ENCODE measurements at regions of chr17 and their contacts with region 1.

Region 1: GRCh38 chr17:8222630-8223356 is 12.4 kb upstream of the AURKB start:
- DNase-seq: peak; percentile 98
- H3K4me3 ChIP-seq: peak overlapping the region; percentile 45 to 71 (median 66)
- H3K27ac ChIP-seq: peak overlapping the region; percentile 95 to 98 (median 96)
- H3K4me1 ChIP-seq: peaks cover 0 to 42% (median 23%) of the 10 kb centered on the region in 4 donors
- H3K27me3 ChIP-seq: no peaks in the 10 kb centered on the region
- CTCF ChIP-seq: no peak
- EP300 ChIP-seq: peak in 1 of 4 donors; percentile 45
- POLR2A ChIP-seq: peak; percentile 57 to 80

Region 2: GRCh38 chr17:8128125-8128784 is 94.5 kb before region 1 on chr17:
- intact Hi-C with region 1: no loop called
- DNase-seq: no peak
- H3K4me3 ChIP-seq: no peak overlapping the region
- H3K27ac ChIP-seq: no peak overlapping the region
- H3K4me1 ChIP-seq: peaks cover 0 to 42% (median 38%) of the 10 kb centered on the region in 4 donors
- H3K27me3 ChIP-seq: peaks cover 4 to 33% (median 22%) of the 10 kb centered on the region in 3 donors
- CTCF ChIP-seq: no peak
- EP300 ChIP-seq: no peak
- POLR2A ChIP-seq: no peak

Region 3: DNA sequence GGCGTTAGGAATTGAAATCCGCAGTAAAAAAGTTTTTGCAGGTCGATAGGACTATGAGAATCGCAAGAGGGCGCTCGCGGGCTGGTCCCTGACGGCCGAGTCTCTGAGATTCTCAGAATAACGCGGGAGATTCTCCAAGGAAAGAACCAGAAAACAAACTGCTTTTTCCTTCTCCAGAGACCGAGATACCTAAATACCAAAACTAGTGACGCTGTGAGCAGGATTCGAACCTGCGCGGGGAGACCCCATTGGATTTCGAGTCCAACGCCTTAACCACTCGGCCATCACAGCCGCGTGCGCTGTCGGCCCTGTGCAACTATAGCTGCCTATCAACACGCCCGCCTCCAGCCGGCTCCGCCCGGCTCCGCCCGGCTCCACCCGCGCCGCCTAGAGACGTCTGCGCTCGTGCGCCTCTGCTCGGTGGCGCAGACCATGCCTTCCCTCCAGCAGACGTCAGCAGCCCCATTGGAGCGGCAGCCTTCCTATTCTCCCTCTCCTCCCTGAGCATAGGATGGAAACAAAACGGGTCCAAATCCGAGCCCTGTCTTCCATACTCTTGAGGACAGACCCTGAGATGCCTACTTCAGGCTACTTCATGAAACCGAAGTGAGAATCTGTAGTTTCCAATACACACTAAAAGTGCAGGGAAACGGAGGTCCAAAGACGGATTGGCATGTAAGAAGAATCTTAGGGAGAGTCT is 84.0 kb before region 1 on chr17:
- intact Hi-C with region 1: loop called (anchors 5 kb)
- DNase-seq: peak; percentile 98
- H3K4me3 ChIP-seq: peak overlapping the region in 3 of 4 donors; percentile 4 to 17 (median 8)
- H3K27ac ChIP-seq: peak overlapping the region; percentile 85 to 100 (median 94)
- H3K4me1 ChIP-seq: peaks cover 0 to 44% (median 29%) of the 10 kb centered on the region in 4 donors
- H3K27me3 ChIP-seq: no peaks in the 10 kb centered on the region
- CTCF ChIP-seq: peak in 3 of 4 experiments; percentile 82 to 98 (median 92)
- EP300 ChIP-seq: peak in 2 of 4 donors; percentile 46 to 96
- POLR2A ChIP-seq: peak; percentile 37 to 60

Region 4: GRCh38 chr17:8162233-8162996 is 60.4 kb before region 1 on chr17 and contains the start of gene VAMP2:
- intact Hi-C with region 1: loop called (anchors 5 kb)
- DNase-seq: peak; percentile 92
- H3K4me3 ChIP-seq: peak within 1 kb of the TSS; percentile 83 to 99 (median 98)
- H3K27ac ChIP-seq: peak within 1 kb of the TSS; percentile 98 to 100 (median 99)
- H3K4me1 ChIP-seq: peaks cover 0 to 61% (median 56%) of the 10 kb centered on the region in 4 donors
- H3K27me3 ChIP-seq: no peaks in the 10 kb centered on the region
- CTCF ChIP-seq: peak in 2 of 4 experiments; percentile 18 to 29
- EP300 ChIP-seq: no peak
- POLR2A ChIP-seq: peak in 1 of 2 donors; percentile 33
- total RNA-seq, gene VAMP2: 20.4 to 29.6 (median 27.3) TPM

Region 5: GRCh38 chr17:8189711-8190477 is 32.9 kb before region 1 on chr17 and contains the start of gene BORCS6:
- intact Hi-C with region 1: loop called (anchors 1 kb)
- DNase-seq: peak; percentile 100
- H3K4me3 ChIP-seq: peak within 1 kb of the TSS; percentile 54 to 78 (median 68)
- H3K27ac ChIP-seq: peak within 1 kb of the TSS; percentile 81 to 99 (median 96)
- H3K4me1 ChIP-seq: peaks cover 0 to 53% (median 41%) of the 10 kb centered on the region in 4 donors
- H3K27me3 ChIP-seq: no peaks in the 10 kb centered on the region
- CTCF ChIP-seq: no peak
- EP300 ChIP-seq: peak in 1 of 4 donors; percentile 26
- POLR2A ChIP-seq: peak; percentile 78 to 84
- total RNA-seq, gene BORCS6: 7.7 to 17.7 (median 15.8) TPM

Region 6: DNA sequence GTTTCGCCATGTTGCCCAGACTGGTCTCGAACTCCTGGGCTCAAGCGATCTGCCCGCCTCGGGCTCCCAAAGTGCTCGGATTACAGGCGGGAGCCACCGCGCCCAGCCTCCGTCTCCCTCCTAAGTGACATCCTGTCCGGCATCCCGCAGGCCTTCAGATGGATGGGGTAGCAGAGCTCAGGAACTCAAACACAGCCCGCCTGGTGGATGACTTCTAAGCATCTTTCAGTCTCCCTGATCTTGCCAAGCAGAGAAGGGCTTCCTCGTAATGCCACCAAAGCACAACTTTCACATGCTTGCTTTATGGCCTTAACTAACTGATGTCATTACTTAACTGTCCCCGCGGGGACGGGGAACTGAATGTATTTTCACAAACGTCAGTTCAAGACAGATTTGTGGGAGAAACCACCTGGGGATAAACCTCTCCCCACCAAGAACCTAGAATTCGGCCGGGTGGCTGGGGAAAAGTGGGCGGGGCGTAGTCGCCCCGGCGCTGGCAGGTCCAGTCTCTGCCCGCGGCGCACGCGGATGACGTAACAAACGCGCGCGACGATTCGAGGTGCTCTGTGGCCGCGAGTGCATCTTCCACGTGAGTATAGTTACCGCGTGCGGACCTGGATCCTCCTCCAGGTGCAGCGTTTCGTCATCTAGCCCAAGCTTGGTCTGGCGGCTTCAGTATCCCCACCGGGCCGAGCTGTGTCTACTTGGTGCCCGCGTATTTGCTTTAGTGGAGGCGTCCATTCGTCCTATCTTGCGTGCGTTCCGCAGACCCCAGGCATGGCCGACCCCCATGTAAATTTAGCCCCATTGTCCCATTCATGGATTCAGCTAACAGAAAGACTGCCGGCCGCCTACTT is 26.2 kb after region 1 on chr17 and contains the start of gene PFAS:
- intact Hi-C with region 1: loop called (anchors 1 kb)
- DNase-seq: peak; percentile 97
- H3K4me3 ChIP-seq: peak within 1 kb of the TSS; percentile 60 to 66 (median 62)
- H3K27ac ChIP-seq: peak within 1 kb of the TSS; percentile 95 to 98 (median 98)
- H3K4me1 ChIP-seq: peaks cover 0 to 34% (median 17%) of the 10 kb centered on the region in 4 donors
- H3K27me3 ChIP-seq: no peaks in the 10 kb centered on the region
- CTCF ChIP-seq: no peak
- EP300 ChIP-seq: peak in 2 of 4 donors; percentile 7
- POLR2A ChIP-seq: peak in 1 of 2 donors; percentile 14
- total RNA-seq, gene PFAS: 4.6 to 10.2 (median 6.9) TPM

Region 7: GRCh38 chr17:8294814-8295316 is 72.1 kb after region 1 on chr17:
- intact Hi-C with region 1: loop called (anchors 2 kb)
- DNase-seq: no peak
- H3K4me3 ChIP-seq: peak overlapping the region; percentile 53 to 78 (median 63)
- H3K27ac ChIP-seq: peak overlapping the region; percentile 90 to 95 (median 92)
- H3K4me1 ChIP-seq: peaks cover 0 to 13% (median 10%) of the 10 kb centered on the region in 4 donors
- H3K27me3 ChIP-seq: no peaks in the 10 kb centered on the region
- CTCF ChIP-seq: no peak
- EP300 ChIP-seq: no peak
- POLR2A ChIP-seq: no peak

Region 8: GRCh38 chr17:8314797-8315763 is 92.3 kb after region 1 on chr17:
- intact Hi-C with region 1: no loop called
- DNase-seq: no peak
- H3K4me3 ChIP-seq: no peak overlapping the region
- H3K27ac ChIP-seq: no peak overlapping the region
- H3K4me1 ChIP-seq: no peaks in the 10 kb centered on the region
- H3K27me3 ChIP-seq: peaks cover 12 to 62% (median 49%) of the 10 kb centered on the region in 3 donors
- CTCF ChIP-seq: no peak
- EP300 ChIP-seq: no peak
- POLR2A ChIP-seq: no peak

Measured in sigmoid colon (tissue), 7 donors.